ENCODE measurements at regions of chr3 and their contacts with region 1.

Region 1: GRCh38 chr3:51682079-51682478 is 11.0 kb downstream of the TEX264 start:
- DNase-seq: peak; percentile 81
- H3K4me3 ChIP-seq: no peak overlapping the region
- H3K27ac ChIP-seq: peak overlapping the region; percentile 45
- H3K4me1 ChIP-seq: peaks cover 18% of the 10 kb centered on the region
- H3K27me3 ChIP-seq: no peaks in the 10 kb centered on the region
- CTCF ChIP-seq: peak; percentile 74

Region 2: DNA sequence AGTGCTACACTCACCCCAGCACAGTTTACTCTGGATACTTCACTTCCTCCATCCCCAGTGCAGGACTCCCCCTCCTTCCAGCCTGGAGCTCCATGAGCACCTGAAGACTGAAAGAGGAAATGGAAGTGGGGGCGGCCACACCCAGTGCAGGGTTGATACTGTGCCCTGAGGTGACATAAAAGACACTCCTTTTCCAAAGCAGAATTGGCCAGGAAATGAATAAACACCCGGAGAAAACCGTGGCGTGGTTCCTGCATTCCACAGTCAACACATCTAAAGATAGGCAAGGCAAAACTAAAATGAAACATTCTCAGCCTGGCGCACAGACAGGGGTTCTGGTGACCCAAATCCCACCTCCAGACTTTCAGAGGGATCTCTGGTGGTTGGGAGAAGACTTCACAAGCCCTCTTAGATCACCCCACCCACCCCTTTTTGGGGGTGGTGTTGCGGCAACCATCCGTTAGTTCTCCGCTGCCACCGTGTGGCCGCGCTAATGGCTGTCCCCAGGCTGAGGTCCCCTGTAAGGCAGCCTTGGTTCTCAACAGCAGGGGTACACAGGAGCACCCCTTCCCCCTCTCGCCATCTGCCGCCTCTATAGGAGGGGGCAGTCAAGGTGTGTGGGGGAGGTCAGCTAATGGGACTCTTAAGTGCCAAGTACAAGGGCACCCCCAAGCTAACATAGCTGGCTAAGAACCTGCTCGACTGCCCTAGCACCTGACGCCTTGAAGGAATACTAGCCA is 1775.9 kb before region 1 on chr3:
- intact Hi-C with region 1: no loop called
- DNase-seq: peak; percentile 90
- H3K4me3 ChIP-seq: peak overlapping the region; percentile 8
- H3K27ac ChIP-seq: peak overlapping the region; percentile 86
- H3K4me1 ChIP-seq: peaks cover 29% of the 10 kb centered on the region
- H3K27me3 ChIP-seq: no peaks in the 10 kb centered on the region
- CTCF ChIP-seq: peak; percentile 58

Region 3: GRCh38 chr3:51637941-51638471 is 44.1 kb before region 1 on chr3:
- intact Hi-C with region 1: loop called (anchors 5 kb)
- DNase-seq: peak; percentile 40
- H3K4me3 ChIP-seq: no peak overlapping the region
- H3K27ac ChIP-seq: no peak overlapping the region
- H3K4me1 ChIP-seq: no peaks in the 10 kb centered on the region
- H3K27me3 ChIP-seq: no peaks in the 10 kb centered on the region
- CTCF ChIP-seq: peak; percentile 61

Region 4: DNA sequence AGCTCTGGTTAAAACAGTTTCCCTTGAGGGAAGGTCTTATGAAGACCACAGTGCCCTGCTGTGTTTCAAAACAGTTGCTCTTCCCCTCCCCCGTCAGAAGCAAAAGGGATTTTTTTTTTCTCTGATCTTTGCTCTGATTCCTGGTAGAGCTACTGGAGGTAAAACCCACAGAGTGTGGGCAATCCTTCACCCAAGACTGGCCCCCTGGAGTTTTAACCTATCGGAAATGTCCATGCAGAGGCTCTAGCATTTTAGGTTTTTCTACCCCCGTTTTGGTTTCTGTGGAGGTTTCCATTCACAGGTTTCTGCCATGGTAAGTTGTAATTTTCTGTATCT is 52.5 kb after region 1 on chr3:
- intact Hi-C with region 1: no loop called
- DNase-seq: no peak
- H3K4me3 ChIP-seq: no peak overlapping the region
- H3K27ac ChIP-seq: no peak overlapping the region
- H3K4me1 ChIP-seq: no peaks in the 10 kb centered on the region
- H3K27me3 ChIP-seq: no peaks in the 10 kb centered on the region
- CTCF ChIP-seq: no peak

Measured in colonic mucosa (tissue), 4 donors.